GM10248 (cell line): ENCODE measurements at regions of chr11 and their contacts with region 1.

Region 1: DNA sequence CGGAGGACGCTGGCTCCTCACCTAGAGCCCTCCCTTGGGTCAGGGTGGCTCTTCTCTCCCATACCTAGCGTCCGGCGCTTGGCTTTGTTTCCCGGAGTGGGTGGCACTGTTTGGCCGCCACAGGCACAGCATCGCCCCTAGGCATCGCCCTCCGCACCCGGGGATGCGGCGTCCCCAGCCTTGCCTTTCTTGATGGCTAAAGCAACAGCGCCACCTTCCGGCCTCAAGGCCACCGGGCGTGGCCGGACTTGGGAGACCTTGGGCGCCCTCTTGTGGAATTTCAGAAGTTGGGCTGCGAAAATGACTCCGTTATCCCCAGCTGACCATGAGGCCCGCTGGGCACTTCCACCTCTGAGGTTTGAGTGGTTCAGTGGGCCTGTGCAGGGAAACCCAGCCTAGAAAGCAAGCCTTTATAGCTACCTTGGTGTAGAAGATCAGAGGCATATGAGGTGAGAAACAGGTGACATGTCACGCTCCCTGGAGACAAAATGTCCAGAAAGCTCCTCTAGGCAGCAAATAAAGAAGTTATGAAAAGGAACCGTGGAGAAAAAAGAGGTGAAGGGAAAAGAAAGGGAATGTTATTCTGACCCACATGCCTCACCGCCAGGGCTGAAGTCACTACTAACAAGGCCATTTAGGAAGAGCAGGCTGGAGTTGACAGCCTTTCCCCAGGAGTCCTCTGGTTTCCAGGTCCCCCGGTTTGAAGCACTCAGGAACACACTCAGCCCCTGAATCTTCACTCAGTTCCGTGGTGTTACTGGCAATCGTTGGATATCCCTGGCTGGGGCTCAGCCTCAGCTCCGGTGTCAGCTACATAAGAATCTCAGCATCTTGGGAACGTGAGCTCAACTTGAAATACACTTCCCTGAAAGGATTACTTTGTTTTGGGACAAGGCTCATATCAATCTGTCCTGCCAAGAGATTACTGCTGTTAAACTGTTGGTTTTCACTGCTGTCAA is 54.1 kb downstream of the SNX19 start:
- DNase-seq: peak; percentile 82
- CTCF ChIP-seq: peak; percentile 100

Region 2: GRCh38 chr11:130418756-130419155 is 443.4 kb before region 1 on chr11:
- CTCF ChIA-PET with region 1: interaction called, 13 read pairs
- POLR2A ChIA-PET with region 1: no interaction called
- DNase-seq: no peak
- CTCF ChIP-seq: no peak

Region 3: GRCh38 chr11:130737041-130737830 is 124.9 kb before region 1 on chr11:
- CTCF ChIA-PET with region 1: no interaction called
- POLR2A ChIA-PET with region 1: no interaction called
- DNase-seq: no peak
- CTCF ChIP-seq: no peak

Region 4: DNA sequence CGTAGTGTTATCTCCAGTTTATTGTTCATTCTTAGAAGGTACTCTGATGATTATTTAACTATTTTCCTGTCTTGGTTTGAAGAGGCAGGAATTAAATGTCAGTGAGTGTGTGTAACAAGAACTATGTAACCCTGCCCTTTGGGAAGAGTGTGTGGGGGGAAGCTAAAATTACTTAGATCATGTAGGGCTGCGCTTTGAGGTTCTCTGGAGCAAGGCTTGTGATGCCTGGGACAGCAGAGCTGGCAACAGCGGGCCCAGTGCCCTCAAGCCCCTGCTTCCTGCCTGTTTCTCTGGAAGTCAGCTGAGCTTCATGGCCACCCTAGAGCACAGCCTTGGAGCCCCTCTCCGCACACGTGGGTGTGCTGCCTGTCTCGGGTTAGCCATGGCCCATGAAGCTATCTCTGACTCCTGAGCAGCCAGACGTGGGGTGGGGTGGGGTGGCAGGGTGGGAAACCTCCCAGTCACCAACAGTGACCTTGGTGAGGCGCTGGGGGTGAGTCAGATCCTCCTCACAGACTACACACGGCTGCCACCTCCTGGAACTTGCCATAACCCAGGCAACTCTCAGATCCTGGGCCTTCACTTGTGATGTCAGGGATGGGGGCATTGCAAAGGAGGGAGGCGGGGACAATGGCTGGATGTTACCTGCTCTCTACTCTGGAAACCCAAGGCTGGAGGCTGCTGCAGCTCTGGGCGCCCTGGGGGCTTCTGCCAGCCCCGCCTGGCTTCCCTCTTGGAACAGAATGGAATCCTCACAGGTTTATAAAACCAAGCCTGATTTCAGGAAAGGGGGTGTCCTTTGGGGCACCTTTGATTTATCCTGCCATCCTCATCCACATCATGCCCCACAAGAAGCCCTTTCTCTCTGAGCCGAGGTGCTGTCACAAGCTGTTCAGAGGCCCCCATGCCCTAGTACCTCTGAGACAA is 34.5 kb before region 1 on chr11:
- CTCF ChIA-PET with region 1: interaction called, 25 read pairs
- POLR2A ChIA-PET with region 1: no interaction called
- DNase-seq: peak; percentile 25
- CTCF ChIP-seq: peak; percentile 16

Region 5: GRCh38 chr11:130872981-130873380 is 10.8 kb after region 1 on chr11:
- CTCF ChIA-PET with region 1: interaction called, 77 read pairs
- POLR2A ChIA-PET with region 1: no interaction called
- DNase-seq: no peak
- CTCF ChIP-seq: no peak

Region 6: DNA sequence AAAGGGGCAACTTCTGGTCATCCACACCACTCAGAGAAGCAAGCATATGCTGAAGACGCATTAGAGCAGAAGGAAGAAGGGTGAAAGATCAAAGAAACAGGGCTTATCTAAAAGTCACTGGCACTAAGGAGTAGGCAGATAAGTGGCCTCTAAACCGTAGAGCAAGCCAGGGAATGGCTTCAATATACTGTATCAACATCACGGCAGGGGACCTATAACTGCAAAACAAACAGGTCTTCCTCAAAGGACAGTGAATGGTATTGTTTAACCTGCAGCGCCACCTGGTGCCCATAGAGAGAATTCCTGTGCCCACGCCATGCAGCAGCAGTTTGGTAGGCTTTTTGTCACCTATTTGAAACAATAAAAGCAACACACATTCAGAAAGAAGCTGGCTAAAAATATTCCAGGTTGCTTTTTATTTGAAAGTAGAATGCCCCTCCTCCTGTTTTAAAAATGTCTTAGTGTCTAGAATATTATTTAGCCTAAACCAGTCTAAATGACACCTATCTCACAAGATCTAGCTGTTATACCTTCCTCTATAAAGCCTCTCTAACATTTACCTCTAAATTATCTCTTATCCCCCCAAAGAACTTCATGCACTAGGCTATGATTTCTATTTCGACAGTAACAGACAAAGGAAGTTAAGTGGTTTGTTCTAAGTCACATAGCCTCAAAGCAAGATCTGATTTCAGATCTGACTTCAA is 32.3 kb after region 1 on chr11:
- CTCF ChIA-PET with region 1: interaction called, 92 read pairs
- POLR2A ChIA-PET with region 1: no interaction called
- DNase-seq: peak; percentile 55
- CTCF ChIP-seq: peak; percentile 87